ENCODE measurements at regions of chr13 and their contacts with region 1.

Region 1: DNA sequence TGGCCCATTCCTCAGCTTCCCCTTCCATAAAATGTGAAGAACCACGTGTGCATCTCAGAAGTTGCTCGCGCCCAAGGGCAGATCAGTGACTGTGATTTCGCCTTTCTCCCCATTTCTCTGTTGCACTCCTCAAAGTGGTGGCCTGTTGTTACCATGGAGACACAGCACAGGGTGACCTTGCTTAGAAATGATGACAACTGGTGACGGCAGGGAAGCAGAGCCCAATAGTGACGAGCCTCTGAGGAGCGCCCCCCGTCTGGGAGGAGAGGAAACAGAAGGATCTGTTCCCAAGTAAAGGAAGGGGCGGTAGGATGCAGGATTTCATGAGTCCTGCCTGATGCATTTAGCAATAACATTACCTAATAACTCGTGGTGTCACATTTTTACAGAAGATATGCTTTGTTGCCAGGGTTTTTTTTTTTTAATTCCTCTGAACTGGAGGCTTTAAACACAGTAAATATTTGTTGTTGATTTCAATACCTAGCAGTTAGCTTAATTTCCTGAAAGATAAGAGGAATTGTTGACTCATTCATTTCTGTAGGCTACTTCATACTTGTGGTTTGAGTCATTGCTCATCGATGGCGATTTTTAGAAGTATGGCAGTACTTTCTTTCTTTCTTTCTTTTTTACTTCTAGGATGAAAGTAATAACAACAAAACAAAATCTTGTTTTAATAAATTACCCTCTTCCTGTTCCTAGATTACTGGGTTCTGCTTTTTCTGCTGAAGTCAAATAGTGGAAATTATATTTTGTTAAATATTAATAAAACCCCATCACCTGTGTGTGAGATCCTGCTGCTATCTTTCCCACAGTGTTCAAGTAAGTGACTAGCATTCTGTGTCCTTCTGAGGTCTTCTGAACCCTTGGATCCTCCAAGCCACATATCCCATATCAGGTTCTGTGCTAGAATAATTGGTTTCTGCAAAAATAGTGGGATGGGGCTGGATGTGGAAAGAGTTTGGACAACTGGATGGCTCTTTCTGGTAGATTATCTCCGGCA is 36.0 kb downstream of the MBNL2 start:
- DNase-seq: peak; percentile 93
- ATAC-seq: peak; percentile 66
- H3K4me3 ChIP-seq: peak overlapping the region in 1 of 2 experiments; percentile 39; a peak in 3 of 4 replicates
- H3K27ac ChIP-seq: peak overlapping the region; percentile 100
- H3K4me1 ChIP-seq: peaks cover 90 to 97% of the 10 kb centered on the region in 2 experiments
- H3K27me3 ChIP-seq: no peaks in the 10 kb centered on the region
- CTCF ChIP-seq: peak in 2 of 3 experiments; percentile 33 to 35; a peak in 2 of 6 replicates
- POLR2A ChIP-seq: no peak
- RAD21 ChIP-seq: no peak

Region 2: GRCh38 chr13:97030705-97031452 is 227.2 kb before region 1 on chr13:
- CTCF ChIA-PET with region 1: no interaction called
- POLR2A ChIA-PET with region 1: no interaction called
- RAD21 ChIA-PET with region 1: no interaction called
- intact Hi-C with region 1: no loop called
- DNase-seq: peak; percentile 46
- ATAC-seq: peak; percentile 85
- H3K4me3 ChIP-seq: no peak overlapping the region
- H3K27ac ChIP-seq: no peak overlapping the region
- H3K4me1 ChIP-seq: peaks cover 0 to 2% of the 10 kb centered on the region in 2 experiments; a peak in 1 of 4 replicates
- H3K27me3 ChIP-seq: no peaks in the 10 kb centered on the region
- CTCF ChIP-seq: peak; percentile 52 to 56 (median 56); a peak in 5 of 6 replicates
- POLR2A ChIP-seq: no peak
- RAD21 ChIP-seq: peak; percentile 69

Region 3: DNA sequence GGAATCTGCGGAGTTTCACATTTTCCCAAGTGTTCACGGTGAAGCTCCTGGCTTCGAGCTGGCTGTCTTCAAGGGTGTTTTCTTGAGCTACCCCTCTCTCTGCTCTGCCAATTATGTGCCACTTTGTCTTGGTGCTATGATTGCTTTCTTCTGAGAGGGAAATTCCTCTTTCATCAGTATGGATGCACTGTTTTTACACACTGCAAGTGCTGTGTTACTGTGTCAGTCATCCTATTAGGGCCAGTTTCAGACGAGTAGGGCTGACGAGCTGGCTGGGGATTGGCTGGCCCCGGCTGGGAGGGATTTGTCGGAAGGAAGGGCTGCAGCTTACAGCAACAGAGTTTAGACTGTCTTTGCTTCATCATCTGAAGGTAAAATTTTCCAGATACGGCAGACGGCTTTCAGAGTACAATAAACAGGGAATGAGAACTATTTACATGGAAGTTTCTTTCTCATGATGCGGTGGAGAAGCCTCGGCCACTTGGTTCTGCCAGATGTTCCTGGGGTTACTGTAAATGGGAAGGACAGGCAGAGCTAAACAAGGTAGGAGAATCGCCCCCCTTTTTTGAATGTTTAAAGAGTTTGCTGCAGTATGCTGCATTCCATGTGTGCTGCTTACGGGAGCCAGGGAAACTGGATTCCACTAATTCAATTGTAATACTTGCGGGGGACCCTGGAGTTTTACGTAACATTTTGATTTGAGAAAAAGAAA is 36.0 kb before region 1 on chr13 and contains the start of gene MBNL2:
- CTCF ChIA-PET with region 1: no interaction called
- POLR2A ChIA-PET with region 1: interaction called, 31 read pairs
- RAD21 ChIA-PET with region 1: no interaction called
- intact Hi-C with region 1: no loop called
- DNase-seq: peak; percentile 81
- ATAC-seq: peak; percentile 99
- H3K4me3 ChIP-seq: peak within 1 kb of the TSS; percentile 74 to 85
- H3K27ac ChIP-seq: peak within 1 kb of the TSS; percentile 74
- H3K4me1 ChIP-seq: peaks cover 45 to 47% of the 10 kb centered on the region in 2 experiments
- H3K27me3 ChIP-seq: no peaks in the 10 kb centered on the region
- CTCF ChIP-seq: no peak
- POLR2A ChIP-seq: no peak
- RAD21 ChIP-seq: 0 out of 2 replicates have a peak, but pooled peaks have one; percentile 14
- total RNA-seq, gene MBNL2: 73.9 TPM

Region 4: DNA sequence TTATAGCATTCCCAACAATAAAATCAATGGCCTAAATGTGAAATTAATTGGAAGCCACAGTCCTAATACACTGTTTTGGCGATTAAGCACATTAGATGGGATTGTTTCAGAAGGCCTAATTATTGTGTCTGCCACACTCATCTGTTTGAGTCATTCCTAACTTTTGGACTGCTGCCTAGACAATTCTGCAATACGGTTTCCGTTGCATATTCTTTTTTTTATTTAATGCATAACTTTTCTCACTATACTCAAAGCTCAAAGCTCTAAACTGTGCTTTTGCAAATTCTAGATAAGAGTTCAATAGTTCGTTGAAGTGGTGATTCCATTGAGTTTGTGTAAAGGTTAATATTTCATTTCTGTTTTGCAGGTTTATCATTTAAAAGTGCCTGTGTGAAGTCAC is 17.2 kb after region 1 on chr13:
- CTCF ChIA-PET with region 1: interaction called, 3 read pairs
- POLR2A ChIA-PET with region 1: interaction called, 8 read pairs
- RAD21 ChIA-PET with region 1: no interaction called
- intact Hi-C with region 1: loop called (anchors 2 kb)
- DNase-seq: no peak
- ATAC-seq: peak; percentile 50
- H3K4me3 ChIP-seq: peak overlapping the region in 1 of 2 experiments; percentile 24; a peak in 1 of 4 replicates
- H3K27ac ChIP-seq: peak overlapping the region; percentile 100
- H3K4me1 ChIP-seq: peaks cover 89 to 95% of the 10 kb centered on the region in 2 experiments
- H3K27me3 ChIP-seq: no peaks in the 10 kb centered on the region
- CTCF ChIP-seq: no peak
- POLR2A ChIP-seq: no peak
- RAD21 ChIP-seq: no peak

Measured in HCT116 (cell line).